A673 (cell line): ENCODE measurements at regions of chr10 and their contacts with region 1.

Region 1: DNA sequence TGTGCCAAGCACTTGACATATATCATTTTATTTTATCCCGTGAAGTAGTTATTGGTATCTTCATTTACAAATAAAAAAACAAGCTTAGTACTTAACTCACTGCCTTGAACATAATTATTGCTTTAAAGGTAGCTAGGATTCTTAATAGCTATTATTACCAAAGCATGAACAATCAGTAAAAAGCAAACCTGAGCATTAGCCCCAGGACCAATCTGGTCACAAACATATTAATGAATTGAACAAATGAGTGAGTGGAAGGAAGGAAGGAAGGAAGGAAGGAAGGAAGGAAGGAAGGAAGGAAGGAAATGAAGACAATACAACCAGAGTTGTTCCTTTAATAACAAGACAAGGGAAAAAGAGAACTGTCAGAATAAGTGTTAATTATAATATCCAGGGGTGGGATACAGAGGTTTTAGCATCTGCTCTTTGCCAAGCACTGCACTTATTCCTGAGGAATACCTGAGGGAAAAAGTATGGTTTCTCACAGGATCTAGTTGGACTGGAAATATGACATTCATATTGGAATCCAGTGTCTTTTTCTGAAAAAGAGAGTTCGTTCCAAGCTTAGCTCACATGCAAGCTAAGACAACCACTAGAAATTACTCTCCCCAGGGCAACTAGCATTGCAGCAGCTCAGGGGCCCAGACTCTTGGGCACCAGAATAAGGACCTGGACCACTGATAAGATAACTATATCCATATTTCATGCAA is 172.9 kb upstream of the MGMT start:
- DNase-seq: peak; percentile 96
- H3K4me3 ChIP-seq: no peak overlapping the region
- H3K27ac ChIP-seq: peak overlapping the region; percentile 98
- H3K4me1 ChIP-seq: peaks cover 59% of the 10 kb centered on the region
- H3K27me3 ChIP-seq: no peaks in the 10 kb centered on the region
- CTCF ChIP-seq: no peak

Region 2: DNA sequence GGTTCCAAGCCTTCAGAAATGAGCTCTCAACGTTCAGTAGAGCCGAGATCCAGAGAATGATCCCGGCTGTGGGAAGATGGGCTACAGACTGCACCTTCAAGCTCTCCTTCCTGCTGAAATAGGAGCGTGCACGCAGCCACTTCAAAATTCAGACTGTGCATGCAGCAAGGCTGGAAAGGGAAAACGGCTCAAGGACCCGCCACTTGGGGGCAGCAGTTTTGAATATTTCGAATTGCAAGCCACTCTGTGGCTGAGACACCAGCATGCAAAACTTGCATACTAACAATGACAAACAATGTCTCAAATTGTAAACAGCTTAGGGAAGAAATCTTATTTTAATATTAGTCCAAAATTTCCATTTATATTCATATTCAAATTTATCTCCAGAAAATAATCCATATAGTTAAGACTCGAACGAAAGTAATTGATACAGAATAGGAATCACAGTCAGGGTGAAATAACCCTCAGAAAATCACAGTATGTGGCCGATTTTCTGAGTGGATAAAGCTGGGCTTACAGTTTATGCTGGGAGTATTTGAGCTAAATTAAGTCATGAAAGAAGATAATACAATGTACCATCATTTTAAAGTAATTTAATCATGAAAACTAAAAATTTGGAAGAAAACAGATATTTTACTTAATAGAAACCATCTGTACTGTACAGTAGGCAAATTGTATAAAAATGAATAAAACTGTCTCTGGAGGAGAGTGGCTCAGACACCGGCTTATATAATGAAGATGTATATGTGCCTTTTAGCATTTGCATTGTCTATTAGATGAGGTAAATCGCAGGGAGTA is 1030.1 kb before region 1 on chr10:
- CTCF ChIA-PET with region 1: no interaction called
- POLR2A ChIA-PET with region 1: no interaction called
- intact Hi-C with region 1: loop called (anchors 5 kb)
- DNase-seq: peak; percentile 79
- H3K4me3 ChIP-seq: no peak overlapping the region
- H3K27ac ChIP-seq: no peak overlapping the region
- H3K4me1 ChIP-seq: no peaks in the 10 kb centered on the region
- H3K27me3 ChIP-seq: peaks cover 9% of the 10 kb centered on the region
- CTCF ChIP-seq: peak; percentile 83

Region 3: GRCh38 chr10:129079705-129080104 is 214.4 kb before region 1 on chr10:
- CTCF ChIA-PET with region 1: no interaction called
- POLR2A ChIA-PET with region 1: no interaction called
- intact Hi-C with region 1: no loop called
- DNase-seq: peak; percentile 94
- H3K4me3 ChIP-seq: no peak overlapping the region
- H3K27ac ChIP-seq: peak overlapping the region; percentile 70
- H3K4me1 ChIP-seq: peaks cover 17% of the 10 kb centered on the region
- H3K27me3 ChIP-seq: no peaks in the 10 kb centered on the region
- CTCF ChIP-seq: no peak

Region 4: GRCh38 chr10:129161150-129161549 is 133.0 kb before region 1 on chr10:
- CTCF ChIA-PET with region 1: interaction called, 5 read pairs
- POLR2A ChIA-PET with region 1: no interaction called
- intact Hi-C with region 1: loop called (anchors 1 kb)
- DNase-seq: peak; percentile 94
- H3K4me3 ChIP-seq: no peak overlapping the region
- H3K27ac ChIP-seq: peak overlapping the region; percentile 1
- H3K4me1 ChIP-seq: peaks cover 19% of the 10 kb centered on the region
- H3K27me3 ChIP-seq: no peaks in the 10 kb centered on the region
- CTCF ChIP-seq: no peak

Region 5: GRCh38 chr10:129244757-129245156 is 49.4 kb before region 1 on chr10:
- CTCF ChIA-PET with region 1: no interaction called
- POLR2A ChIA-PET with region 1: no interaction called
- intact Hi-C with region 1: no loop called
- DNase-seq: no peak
- H3K4me3 ChIP-seq: no peak overlapping the region
- H3K27ac ChIP-seq: no peak overlapping the region
- H3K4me1 ChIP-seq: no peaks in the 10 kb centered on the region
- H3K27me3 ChIP-seq: no peaks in the 10 kb centered on the region
- CTCF ChIP-seq: no peak

Region 6: GRCh38 chr10:129332476-129332875 is 38.3 kb after region 1 on chr10:
- CTCF ChIA-PET with region 1: interaction called, 8 read pairs
- POLR2A ChIA-PET with region 1: no interaction called
- intact Hi-C with region 1: loop called (anchors 1 kb)
- DNase-seq: peak; percentile 88
- H3K4me3 ChIP-seq: no peak overlapping the region
- H3K27ac ChIP-seq: peak overlapping the region; percentile 58
- H3K4me1 ChIP-seq: peaks cover 64% of the 10 kb centered on the region
- H3K27me3 ChIP-seq: no peaks in the 10 kb centered on the region
- CTCF ChIP-seq: peak; percentile 96

Region 7: DNA sequence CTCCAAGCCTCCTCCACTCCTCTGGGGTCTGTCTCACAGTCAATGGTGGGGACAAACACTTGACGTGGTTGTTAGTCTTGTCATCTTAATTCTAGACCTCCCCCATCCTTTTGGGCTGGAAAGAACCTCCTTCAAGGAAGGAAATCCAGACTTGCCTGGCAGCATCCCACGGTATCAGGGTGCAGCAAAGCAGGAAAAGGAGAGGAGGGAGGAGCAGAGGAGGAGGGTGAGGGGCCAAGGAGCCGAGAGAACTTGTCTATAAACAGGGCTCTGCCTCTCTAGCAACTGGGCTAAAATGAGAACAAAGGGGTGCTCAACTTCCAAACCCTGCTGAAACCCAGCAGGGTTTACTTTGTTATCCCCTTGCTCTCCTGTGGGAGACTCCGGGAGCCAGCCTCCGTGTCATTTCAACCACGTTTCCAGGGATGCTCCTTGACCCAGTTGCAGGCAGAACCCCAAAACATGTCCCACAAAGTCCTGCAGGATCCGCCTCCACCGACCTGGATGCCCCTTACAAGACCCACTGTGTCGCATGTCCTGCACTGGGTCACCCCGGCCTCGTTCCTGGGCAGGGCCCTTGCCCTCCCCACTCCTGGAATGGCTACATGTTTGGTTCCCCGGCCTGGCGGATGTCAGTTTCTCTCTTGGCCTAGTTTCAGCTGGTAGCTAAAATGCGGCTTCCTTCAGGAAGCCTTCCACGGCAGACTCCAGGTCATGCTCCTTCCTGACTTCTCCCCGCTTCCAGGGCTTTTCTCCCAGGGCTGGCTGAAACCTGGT is 103.2 kb after region 1 on chr10:
- CTCF ChIA-PET with region 1: no interaction called
- POLR2A ChIA-PET with region 1: no interaction called
- intact Hi-C with region 1: no loop called
- DNase-seq: no peak
- H3K4me3 ChIP-seq: no peak overlapping the region
- H3K27ac ChIP-seq: no peak overlapping the region
- H3K4me1 ChIP-seq: peaks cover 12% of the 10 kb centered on the region
- H3K27me3 ChIP-seq: no peaks in the 10 kb centered on the region
- CTCF ChIP-seq: no peak

Region 8: DNA sequence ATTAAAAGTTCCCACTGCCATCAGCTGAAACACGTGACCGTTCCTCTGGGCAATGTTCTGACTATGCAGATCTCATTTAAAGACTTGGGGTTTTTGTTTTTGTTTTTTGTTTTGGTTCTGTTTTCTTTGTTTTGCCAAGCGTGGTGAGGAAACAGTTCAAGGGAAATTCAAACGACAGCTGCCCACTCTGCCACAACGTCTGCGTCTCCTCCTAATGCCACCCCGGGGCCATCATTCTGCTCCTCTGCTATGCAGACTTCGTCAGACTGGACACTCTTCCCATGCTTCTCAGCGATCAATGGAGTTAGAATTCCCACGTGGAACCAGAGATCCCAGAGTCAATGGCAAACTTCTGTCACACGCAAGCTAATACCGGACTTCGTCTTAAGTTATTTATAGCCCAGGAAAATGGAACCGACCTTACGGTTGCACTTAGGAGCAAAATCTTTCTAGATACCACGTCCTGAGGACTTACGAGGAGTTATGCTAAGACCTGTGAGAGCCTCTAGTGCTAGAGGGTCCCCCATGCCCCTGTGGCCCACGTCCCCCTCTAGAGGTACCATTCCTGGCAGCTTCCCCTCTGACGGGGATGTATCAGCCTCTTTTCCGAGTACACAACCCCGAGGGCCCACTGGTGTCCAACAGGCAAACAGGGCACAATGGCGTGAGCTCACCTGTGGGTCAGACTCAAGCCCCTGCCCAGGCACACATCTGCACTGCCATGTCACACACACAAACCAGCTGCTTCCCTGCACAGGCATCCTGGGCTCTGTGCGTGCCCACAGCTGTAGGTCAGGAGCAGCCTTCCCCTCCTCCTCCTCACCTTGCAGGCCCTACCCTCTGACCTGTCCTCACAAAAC is 645.5 kb after region 1 on chr10:
- CTCF ChIA-PET with region 1: no interaction called
- POLR2A ChIA-PET with region 1: interaction called, 26 read pairs
- intact Hi-C with region 1: no loop called
- DNase-seq: no peak
- H3K4me3 ChIP-seq: no peak overlapping the region
- H3K27ac ChIP-seq: peak overlapping the region; percentile 2
- H3K4me1 ChIP-seq: no peaks in the 10 kb centered on the region
- H3K27me3 ChIP-seq: no peaks in the 10 kb centered on the region
- CTCF ChIP-seq: no peak